ENCODE measurements at regions of chr4 and their contacts with region 1.

Region 1: GRCh38 chr4:82851885-82852750 is 38.8 kb downstream of the SEC31A start:
- DNase-seq: peak; percentile 45
- ATAC-seq: peak; percentile 62
- H3K4me3 ChIP-seq: no peak overlapping the region
- H3K27ac ChIP-seq: no peak overlapping the region
- H3K4me1 ChIP-seq: no peaks in the 10 kb centered on the region
- H3K27me3 ChIP-seq: no peaks in the 10 kb centered on the region
- CTCF ChIP-seq: peak; percentile 36
- EP300 ChIP-seq: no peak
- POLR2A ChIP-seq: no peak
- RAD21 ChIP-seq: no peak

Region 2: DNA sequence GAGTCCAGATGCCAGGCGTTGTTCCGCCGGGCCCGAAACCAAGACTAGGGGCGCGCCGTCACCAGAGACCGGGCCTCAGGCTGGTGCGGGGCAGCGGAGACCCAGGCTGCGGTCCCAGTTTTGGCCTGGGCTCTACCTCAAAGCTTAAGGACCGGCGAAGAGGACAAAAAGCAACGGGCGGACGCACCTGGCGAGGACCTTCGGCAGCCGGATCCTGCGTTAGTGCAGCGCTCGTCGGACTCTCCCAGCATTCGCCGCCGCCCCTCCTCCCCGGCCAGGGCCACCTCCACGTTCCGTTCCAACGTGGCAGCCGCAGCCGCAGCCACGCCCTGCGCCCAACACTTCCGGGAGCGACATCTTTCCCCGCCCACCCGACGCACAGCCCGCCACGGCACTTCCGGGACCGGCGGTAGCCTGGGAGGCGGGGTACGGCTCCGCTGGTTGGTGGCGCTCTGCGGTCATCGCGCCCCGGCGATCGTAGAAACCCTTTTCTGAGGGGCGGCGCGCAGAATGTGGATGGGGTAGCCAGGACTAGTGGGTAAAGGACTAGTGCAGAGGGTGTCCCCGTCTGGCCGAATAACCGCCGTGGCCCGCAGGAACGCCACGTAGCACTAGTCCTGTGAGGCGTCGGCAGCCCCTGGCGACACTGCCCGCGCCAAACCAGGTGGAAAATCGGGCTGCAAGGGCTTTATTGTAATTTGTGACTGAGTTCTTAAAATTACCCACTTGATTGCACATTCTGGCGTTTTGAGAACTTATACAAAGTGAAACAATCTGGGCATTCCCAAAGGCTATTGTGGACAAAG is 39.0 kb after region 1 on chr4 and contains the start of gene SEC31A:
- CTCF ChIA-PET with region 1: no interaction called
- POLR2A ChIA-PET with region 1: no interaction called
- in situ Hi-C with region 1: no loop called
- intact Hi-C with region 1: loop called (anchors 2 kb)
- DNase-seq: peak; percentile 91
- ATAC-seq: peak; percentile 91
- H3K4me3 ChIP-seq: peak within 1 kb of the TSS; percentile 81 to 99 (median 91)
- H3K27ac ChIP-seq: peak within 1 kb of the TSS; percentile 98
- H3K4me1 ChIP-seq: peaks cover 41% of the 10 kb centered on the region
- H3K27me3 ChIP-seq: no peaks in the 10 kb centered on the region; a peak in 2 of 5 replicates
- CTCF ChIP-seq: peak; percentile 71
- EP300 ChIP-seq: peak in 1 of 2 experiments; percentile 59; a peak in 3 of 4 replicates
- POLR2A ChIP-seq: peak; percentile 94 to 97
- RAD21 ChIP-seq: peak; percentile 15; the same call in 1 of the 2 replicates
- total RNA-seq, gene SEC31A: 231 and 351 TPM in 2 replicates

Region 3: GRCh38 chr4:82930848-82931755 is 79.0 kb after region 1 on chr4:
- CTCF ChIA-PET with region 1: no interaction called
- POLR2A ChIA-PET with region 1: no interaction called
- in situ Hi-C with region 1: no loop called
- intact Hi-C with region 1: no loop called
- DNase-seq: no peak
- ATAC-seq: no peak
- H3K4me3 ChIP-seq: no peak overlapping the region
- H3K27ac ChIP-seq: no peak overlapping the region
- H3K4me1 ChIP-seq: 0 out of 2 replicates have a peak, but pooled peaks cover 10% of the 10 kb centered on the region
- H3K27me3 ChIP-seq: no peaks in the 10 kb centered on the region
- CTCF ChIP-seq: no peak
- EP300 ChIP-seq: no peak
- POLR2A ChIP-seq: no peak
- RAD21 ChIP-seq: no peak

Region 4: GRCh38 chr4:82975792-82976191 is 123.7 kb after region 1 on chr4:
- CTCF ChIA-PET with region 1: no interaction called
- POLR2A ChIA-PET with region 1: no interaction called
- in situ Hi-C with region 1: no loop called
- intact Hi-C with region 1: no loop called
- DNase-seq: no peak
- ATAC-seq: no peak
- H3K4me3 ChIP-seq: no peak overlapping the region
- H3K27ac ChIP-seq: no peak overlapping the region
- H3K4me1 ChIP-seq: no peaks in the 10 kb centered on the region
- H3K27me3 ChIP-seq: no peaks in the 10 kb centered on the region
- CTCF ChIP-seq: no peak
- EP300 ChIP-seq: no peak
- POLR2A ChIP-seq: no peak
- RAD21 ChIP-seq: no peak